Head of caudate nucleus (tissue), 42 donors: ENCODE measurements at regions of chr2 and their contacts with region 1.

Region 1: GRCh38 chr2:113889471-113890252 is at the start of gene ACTR3:
- DNase-seq: peak; percentile 86 to 99 (median 97)

Region 2: DNA sequence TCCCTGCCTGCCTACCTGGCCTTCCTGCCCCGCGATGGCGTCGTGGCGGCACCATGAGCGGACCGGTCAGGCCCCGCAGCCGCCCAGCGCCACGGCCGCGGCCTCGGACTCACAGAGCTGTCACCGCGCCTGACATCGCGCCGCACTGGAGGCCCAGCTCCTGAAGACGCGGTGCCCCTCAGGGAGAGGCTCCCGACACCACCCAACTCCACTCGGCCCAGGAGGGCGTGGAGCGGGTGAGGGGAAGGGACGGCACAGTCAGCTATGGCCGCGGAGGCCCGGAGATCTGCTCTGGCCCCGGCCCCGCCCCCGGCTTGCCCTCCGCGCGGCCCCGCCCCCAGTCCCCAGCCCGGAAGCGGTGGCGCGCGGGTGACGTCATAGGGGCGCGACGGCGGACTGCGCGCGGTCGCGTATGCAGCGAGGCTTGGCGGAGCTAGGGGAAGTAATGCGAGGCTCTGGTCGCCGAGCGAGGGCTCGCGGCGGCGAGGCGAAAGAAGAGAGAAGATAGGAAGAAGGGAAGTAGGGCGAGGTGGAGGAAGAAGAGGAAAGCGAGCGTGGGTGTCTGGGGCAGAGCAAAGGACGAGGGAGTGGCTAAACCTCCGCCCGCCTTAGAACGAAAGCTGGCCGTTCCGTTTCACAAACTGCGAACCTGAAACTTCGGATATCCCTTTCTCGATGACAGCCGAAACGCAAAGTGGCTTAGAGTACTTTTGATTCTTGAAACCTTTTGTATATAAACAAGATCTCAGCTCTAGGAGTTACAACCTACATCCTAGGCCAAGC is 133.1 kb before region 1 on chr2 and contains the start of gene SLC35F5:
- intact Hi-C with region 1: loop called (anchors 1 kb)
- DNase-seq: peak; percentile 63 to 98 (median 92)

Region 3: GRCh38 chr2:113784823-113785744 is 104.6 kb before region 1 on chr2:
- intact Hi-C with region 1: no loop called
- DNase-seq: no peak

Region 4: GRCh38 chr2:114056294-114057143 is 166.9 kb after region 1 on chr2:
- intact Hi-C with region 1: no loop called
- DNase-seq: no peak